ENCODE measurements at regions of chr16 and their contacts with region 1.

Region 1: GRCh38 chr16:30805370-30806169 is 18.6 kb upstream of the ZNF629 start:
- DNase-seq: peak; percentile 90 to 96
- ATAC-seq: peak; percentile 97 to 98 (median 97)
- H3K4me3 ChIP-seq: peak overlapping the region; percentile 83
- H3K27ac ChIP-seq: peak overlapping the region; percentile 88
- H3K4me1 ChIP-seq: peaks cover 13% of the 10 kb centered on the region
- H3K27me3 ChIP-seq: no peaks in the 10 kb centered on the region
- CTCF ChIP-seq: no peak

Region 2: GRCh38 chr16:30585400-30586189 is 220.0 kb before region 1 on chr16 and contains the start of gene ZNF785:
- intact Hi-C with region 1: no loop called
- DNase-seq: peak; percentile 96 to 97
- ATAC-seq: peak; percentile 99 to 100 (median 100)
- H3K4me3 ChIP-seq: peak within 1 kb of the TSS; percentile 81
- H3K27ac ChIP-seq: peak within 1 kb of the TSS; percentile 87
- H3K4me1 ChIP-seq: peaks cover 11% of the 10 kb centered on the region
- H3K27me3 ChIP-seq: no peaks in the 10 kb centered on the region
- CTCF ChIP-seq: peak; percentile 10
- total RNA-seq, gene ZNF785: 3.4 to 5.4 (median 3.9) TPM

Region 3: GRCh38 chr16:30786936-30787612 is 18.5 kb before region 1 on chr16 and contains the start of gene ZNF629:
- intact Hi-C with region 1: loop called (anchors 1 kb)
- DNase-seq: peak; percentile 67 to 86
- ATAC-seq: peak; percentile 77 to 89 (median 81)
- H3K4me3 ChIP-seq: peak within 1 kb of the TSS; percentile 98
- H3K27ac ChIP-seq: peak within 1 kb of the TSS; percentile 83
- H3K4me1 ChIP-seq: no peaks in the 10 kb centered on the region
- H3K27me3 ChIP-seq: no peaks in the 10 kb centered on the region
- CTCF ChIP-seq: no peak
- total RNA-seq, gene ZNF629: 5.3 to 15.9 (median 13.1) TPM

Region 4: GRCh38 chr16:30874821-30875717 is 69.5 kb after region 1 on chr16:
- intact Hi-C with region 1: no loop called
- DNase-seq: peak; percentile 93 to 96
- ATAC-seq: peak; percentile 98 to 99 (median 98)
- H3K4me3 ChIP-seq: peak overlapping the region; percentile 94
- H3K27ac ChIP-seq: peak overlapping the region; percentile 90
- H3K4me1 ChIP-seq: peaks cover 14% of the 10 kb centered on the region
- H3K27me3 ChIP-seq: no peaks in the 10 kb centered on the region
- CTCF ChIP-seq: no peak

Region 5: DNA sequence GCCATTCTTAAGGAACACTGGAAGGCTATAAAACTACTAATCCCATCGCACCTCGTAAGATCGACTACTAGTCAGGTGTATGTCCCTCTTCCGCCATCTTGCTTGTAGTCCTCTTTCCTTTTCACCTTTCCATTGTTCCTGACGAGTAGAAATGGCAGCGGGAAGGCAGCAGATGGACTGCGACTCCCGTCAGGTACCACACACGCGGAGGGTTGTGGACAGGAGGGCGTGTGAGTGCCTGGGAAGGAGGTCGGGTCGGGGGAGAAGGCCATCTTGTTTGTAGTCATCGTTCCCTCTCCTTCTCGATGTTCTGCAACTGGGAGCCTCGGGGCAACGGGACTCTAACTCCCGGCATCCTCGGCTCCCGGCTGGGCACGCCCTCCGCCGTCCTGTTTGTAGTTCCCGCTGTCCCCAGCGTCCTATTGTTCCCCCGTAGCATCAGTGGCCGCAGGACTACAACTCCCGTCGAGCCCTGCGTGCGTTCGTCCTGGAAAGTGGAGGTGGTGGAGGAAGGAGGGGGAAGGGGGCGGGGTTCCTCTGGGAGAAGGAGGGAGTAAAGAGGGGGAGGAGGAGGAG is 117.5 kb after region 1 on chr16:
- intact Hi-C with region 1: no loop called
- DNase-seq: peak; percentile 100
- ATAC-seq: peak; percentile 80 to 82 (median 81)
- H3K4me3 ChIP-seq: peak overlapping the region; percentile 81
- H3K27ac ChIP-seq: peak overlapping the region; percentile 86
- H3K4me1 ChIP-seq: peaks cover 7% of the 10 kb centered on the region
- H3K27me3 ChIP-seq: no peaks in the 10 kb centered on the region
- CTCF ChIP-seq: no peak

Region 6: GRCh38 chr16:31052124-31052523 is 246.6 kb after region 1 on chr16:
- intact Hi-C with region 1: no loop called
- DNase-seq: no peak
- ATAC-seq: peak; percentile 50 to 76 (median 64)
- H3K4me3 ChIP-seq: no peak overlapping the region
- H3K27ac ChIP-seq: no peak overlapping the region
- H3K4me1 ChIP-seq: no peaks in the 10 kb centered on the region
- H3K27me3 ChIP-seq: no peaks in the 10 kb centered on the region
- CTCF ChIP-seq: no peak

Measured in psoas muscle (tissue), 8 donors.